Activated CD4-positive, alpha-beta T cell treated with anti-CD3 and anti-CD28 coated beads for 36 hours (primary cell): ENCODE measurements at regions of chr18 and their contacts with region 1.

Region 1: GRCh38 chr18:14086458-14087231 is 45.6 kb downstream of the ZNF519 start:
- DNase-seq: peak; percentile 34
- ATAC-seq: no peak
- H3K4me3 Mint-ChIP-seq: no peak overlapping the region
- H3K27ac Mint-ChIP-seq: no peak overlapping the region
- H3K4me1 Mint-ChIP-seq: no peaks in the 10 kb centered on the region
- H3K27me3 Mint-ChIP-seq: peaks cover 2% of the 10 kb centered on the region

Region 2: DNA sequence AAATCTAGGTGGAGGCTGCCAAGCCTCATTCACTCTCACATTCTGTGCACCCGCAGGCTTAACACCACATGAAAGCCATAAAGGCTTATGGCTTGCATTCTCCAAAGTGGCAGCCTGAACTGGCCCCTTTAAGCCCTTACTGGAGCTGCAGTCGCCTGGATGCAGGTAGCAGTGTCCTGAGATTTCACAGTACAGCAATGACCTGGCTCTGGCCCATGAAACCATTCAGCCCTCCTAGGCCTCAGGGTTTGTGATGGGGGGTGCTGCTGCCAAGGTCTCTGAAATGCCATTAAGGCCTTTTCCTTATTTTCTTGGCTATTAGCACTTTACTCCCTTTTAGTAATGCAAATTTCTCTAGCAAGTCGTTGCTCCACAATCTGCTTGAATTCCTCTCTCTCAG is 311.6 kb before region 1 on chr18:
- CTCF ChIA-PET with region 1: no interaction called
- POLR2A ChIA-PET with region 1: no interaction called
- intact Hi-C with region 1: no loop called
- DNase-seq: no peak
- ATAC-seq: no peak
- H3K4me3 Mint-ChIP-seq: no peak overlapping the region
- H3K27ac Mint-ChIP-seq: no peak overlapping the region
- H3K4me1 Mint-ChIP-seq: no peaks in the 10 kb centered on the region
- H3K27me3 Mint-ChIP-seq: peaks cover 10% of the 10 kb centered on the region

Region 3: GRCh38 chr18:13813271-13813849 is 273.3 kb before region 1 on chr18:
- CTCF ChIA-PET with region 1: interaction called, 50 read pairs
- POLR2A ChIA-PET with region 1: no interaction called
- intact Hi-C with region 1: loop called (anchors 2 to 5 kb)
- DNase-seq: peak; percentile 74
- ATAC-seq: peak; percentile 91
- H3K4me3 Mint-ChIP-seq: no peak overlapping the region
- H3K27ac Mint-ChIP-seq: no peak overlapping the region
- H3K4me1 Mint-ChIP-seq: no peaks in the 10 kb centered on the region
- H3K27me3 Mint-ChIP-seq: peaks cover 2% of the 10 kb centered on the region

Region 4: DNA sequence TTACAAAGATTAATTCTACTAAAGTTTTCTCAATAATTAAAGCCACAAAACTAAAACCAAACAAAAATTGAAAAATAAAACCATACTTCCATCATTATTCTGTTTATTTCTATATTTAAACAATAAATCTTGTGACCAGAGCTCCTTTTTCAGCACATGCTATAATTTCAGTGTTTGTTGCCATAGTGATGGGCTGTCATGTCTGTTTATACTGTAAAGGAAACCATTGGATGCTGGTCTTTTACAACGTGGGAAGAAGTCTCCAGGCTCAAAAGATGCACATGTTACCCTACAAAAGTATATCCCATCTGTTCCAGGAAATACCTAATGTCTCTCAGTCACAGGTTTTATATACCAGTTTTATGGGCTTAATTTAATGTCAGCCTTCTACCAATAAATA is 71.2 kb before region 1 on chr18:
- CTCF ChIA-PET with region 1: no interaction called
- POLR2A ChIA-PET with region 1: no interaction called
- intact Hi-C with region 1: no loop called
- DNase-seq: no peak
- ATAC-seq: no peak
- H3K4me3 Mint-ChIP-seq: no peak overlapping the region
- H3K27ac Mint-ChIP-seq: no peak overlapping the region
- H3K4me1 Mint-ChIP-seq: no peaks in the 10 kb centered on the region
- H3K27me3 Mint-ChIP-seq: peaks cover 6% of the 10 kb centered on the region

Region 5: DNA sequence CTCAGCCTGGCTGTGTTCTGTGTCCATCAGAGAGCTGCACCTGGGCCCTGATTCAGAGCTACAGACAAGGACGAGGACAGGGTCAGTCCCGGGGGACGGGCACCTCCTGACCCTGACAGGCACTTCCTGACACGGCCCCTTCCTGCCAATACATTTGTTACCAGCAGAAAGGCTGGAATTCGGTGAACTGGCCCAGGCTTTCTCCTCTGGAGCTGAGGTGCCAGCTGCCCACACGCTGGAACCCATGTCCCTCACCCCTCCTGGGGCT is 57.9 kb after region 1 on chr18:
- CTCF ChIA-PET with region 1: no interaction called
- POLR2A ChIA-PET with region 1: no interaction called
- intact Hi-C with region 1: no loop called
- DNase-seq: no peak
- ATAC-seq: no peak
- H3K4me3 Mint-ChIP-seq: no peak overlapping the region
- H3K27ac Mint-ChIP-seq: no peak overlapping the region
- H3K4me1 Mint-ChIP-seq: no peaks in the 10 kb centered on the region
- H3K27me3 Mint-ChIP-seq: no peaks in the 10 kb centered on the region